BJ (cell line): ENCODE measurements at regions of chr11 and their contacts with region 1.

Region 1: DNA sequence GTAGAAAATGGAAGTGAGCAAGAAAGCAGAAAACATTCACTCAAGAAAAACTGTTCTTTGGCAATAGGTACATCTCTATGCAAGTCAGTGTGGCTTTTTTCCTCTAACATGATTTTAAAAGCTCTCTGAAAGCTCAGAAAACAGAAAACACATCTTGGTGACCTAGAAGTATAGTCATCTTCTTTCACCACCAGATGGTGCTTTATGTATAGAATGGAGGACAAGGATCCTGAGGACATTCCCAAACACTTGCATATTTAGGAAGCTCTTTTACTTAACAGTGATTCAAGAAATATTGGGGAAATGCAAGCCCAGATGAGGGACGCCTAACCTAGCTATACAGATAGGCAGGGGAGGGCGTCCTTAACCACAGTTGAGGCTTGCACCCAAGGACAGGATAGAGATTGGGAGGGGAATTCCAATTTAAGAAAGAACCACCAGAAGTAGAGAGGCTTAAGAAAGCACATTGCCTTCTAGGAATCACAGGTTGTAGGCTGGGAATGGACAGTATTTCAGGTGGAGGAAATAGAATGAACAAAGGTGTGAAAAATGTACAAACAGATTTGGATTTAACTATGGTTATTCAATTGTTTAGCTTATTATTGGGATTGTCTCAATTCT is 13.8 kb upstream of the CCDC81 start:
- DNase-seq: peak; percentile 8
- H3K4me3 ChIP-seq: no peak overlapping the region
- H3K27me3 ChIP-seq: no peaks in the 10 kb centered on the region
- CTCF ChIP-seq: peak; percentile 51

Region 2: DNA sequence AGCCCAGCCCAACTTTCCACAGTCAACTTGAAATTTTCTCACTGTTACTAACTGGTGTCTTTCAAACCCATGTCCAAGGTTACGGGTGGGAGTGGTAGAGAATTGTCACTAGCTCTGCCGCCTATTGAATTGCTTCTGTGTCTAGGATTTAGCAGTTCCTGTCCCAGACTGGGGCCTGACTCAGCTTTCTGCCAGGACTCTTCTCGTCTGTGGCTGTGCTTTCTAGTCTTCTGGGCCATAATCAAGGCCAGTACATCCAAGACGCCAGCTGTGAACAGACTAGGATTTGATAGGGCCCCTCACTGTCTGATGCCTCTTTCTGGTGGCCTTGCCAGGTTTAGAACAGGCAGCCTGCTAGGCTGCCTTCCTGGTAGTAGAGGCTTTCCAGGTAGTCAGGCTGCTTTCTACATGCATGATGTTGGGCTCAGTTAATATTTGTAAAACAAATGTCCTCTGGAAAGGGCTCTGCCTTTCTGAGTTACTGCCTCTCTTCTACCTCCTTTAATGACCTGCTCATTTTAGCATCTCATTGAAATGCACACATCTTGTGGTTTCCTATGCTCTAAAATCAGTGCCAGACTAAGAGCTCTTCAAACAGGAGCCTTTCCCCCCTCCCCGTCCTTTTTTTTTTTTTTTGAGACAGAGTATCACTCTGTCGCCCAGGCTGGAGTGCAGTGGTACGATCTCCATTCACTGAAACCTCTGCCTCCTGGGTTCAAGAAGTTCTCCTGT is 71.9 kb before region 1 on chr11:
- CTCF ChIA-PET with region 1: no interaction called
- POLR2A ChIA-PET with region 1: no interaction called
- DNase-seq: no peak
- H3K4me3 ChIP-seq: no peak overlapping the region
- H3K27me3 ChIP-seq: no peaks in the 10 kb centered on the region
- CTCF ChIP-seq: no peak

Region 3: DNA sequence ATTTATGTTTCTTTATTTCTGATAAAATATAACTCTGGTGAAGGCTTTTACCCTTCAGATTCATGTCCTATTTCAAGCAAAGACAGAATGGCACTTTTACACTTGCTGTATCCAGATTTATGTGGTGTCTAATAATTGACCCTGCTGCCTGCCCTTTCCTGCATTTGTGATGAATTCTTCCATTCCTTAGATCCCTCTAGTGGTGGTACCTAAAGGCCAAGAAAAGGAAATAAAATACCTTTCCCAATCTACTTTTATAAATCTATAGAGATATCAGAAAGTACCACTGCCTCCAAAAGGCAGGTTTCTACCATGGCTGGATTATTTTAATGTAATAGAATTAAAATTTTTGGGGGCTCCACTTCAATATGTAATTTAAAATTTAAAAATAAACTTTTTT is 48.0 kb after region 1 on chr11:
- CTCF ChIA-PET with region 1: interaction called, 10 read pairs
- POLR2A ChIA-PET with region 1: no interaction called
- DNase-seq: no peak
- H3K4me3 ChIP-seq: no peak overlapping the region
- H3K27me3 ChIP-seq: no peaks in the 10 kb centered on the region
- CTCF ChIP-seq: peak; percentile 43

Region 4: GRCh38 chr11:86418917-86419316 is 58.0 kb after region 1 on chr11:
- CTCF ChIA-PET with region 1: interaction called, 25 read pairs
- POLR2A ChIA-PET with region 1: no interaction called
- DNase-seq: no peak
- H3K4me3 ChIP-seq: no peak overlapping the region
- H3K27me3 ChIP-seq: no peaks in the 10 kb centered on the region
- CTCF ChIP-seq: peak; percentile 22; the same call in 1 of the 2 replicates